ENCODE measurements at regions of chr4 and their contacts with region 1.

Region 1: GRCh38 chr4:168279556-168279955 is 39.0 kb downstream of the DDX60 start:
- DNase-seq: no peak
- ATAC-seq: no peak
- H3K4me3 ChIP-seq: no peak overlapping the region
- H3K27ac ChIP-seq: no peak overlapping the region
- H3K4me1 ChIP-seq: no peaks in the 10 kb centered on the region
- H3K27me3 ChIP-seq: no peaks in the 10 kb centered on the region
- CTCF ChIP-seq: no peak

Region 2: GRCh38 chr4:168318266-168318895 is 38.8 kb after region 1 on chr4 and contains the start of gene DDX60:
- intact Hi-C with region 1: loop called in 1 of 2 experiments (anchors 5 kb)
- DNase-seq: peak; percentile 68 to 76
- ATAC-seq: peak; percentile 82 to 95 (median 92)
- H3K4me3 ChIP-seq: peak within 1 kb of the TSS; percentile 98
- H3K27ac ChIP-seq: peak within 1 kb of the TSS; percentile 88
- H3K4me1 ChIP-seq: peaks cover 6% of the 10 kb centered on the region
- H3K27me3 ChIP-seq: no peaks in the 10 kb centered on the region
- CTCF ChIP-seq: peak; percentile 51
- total RNA-seq, gene DDX60: 1.4 to 3.6 (median 2.7) TPM

Region 3: DNA sequence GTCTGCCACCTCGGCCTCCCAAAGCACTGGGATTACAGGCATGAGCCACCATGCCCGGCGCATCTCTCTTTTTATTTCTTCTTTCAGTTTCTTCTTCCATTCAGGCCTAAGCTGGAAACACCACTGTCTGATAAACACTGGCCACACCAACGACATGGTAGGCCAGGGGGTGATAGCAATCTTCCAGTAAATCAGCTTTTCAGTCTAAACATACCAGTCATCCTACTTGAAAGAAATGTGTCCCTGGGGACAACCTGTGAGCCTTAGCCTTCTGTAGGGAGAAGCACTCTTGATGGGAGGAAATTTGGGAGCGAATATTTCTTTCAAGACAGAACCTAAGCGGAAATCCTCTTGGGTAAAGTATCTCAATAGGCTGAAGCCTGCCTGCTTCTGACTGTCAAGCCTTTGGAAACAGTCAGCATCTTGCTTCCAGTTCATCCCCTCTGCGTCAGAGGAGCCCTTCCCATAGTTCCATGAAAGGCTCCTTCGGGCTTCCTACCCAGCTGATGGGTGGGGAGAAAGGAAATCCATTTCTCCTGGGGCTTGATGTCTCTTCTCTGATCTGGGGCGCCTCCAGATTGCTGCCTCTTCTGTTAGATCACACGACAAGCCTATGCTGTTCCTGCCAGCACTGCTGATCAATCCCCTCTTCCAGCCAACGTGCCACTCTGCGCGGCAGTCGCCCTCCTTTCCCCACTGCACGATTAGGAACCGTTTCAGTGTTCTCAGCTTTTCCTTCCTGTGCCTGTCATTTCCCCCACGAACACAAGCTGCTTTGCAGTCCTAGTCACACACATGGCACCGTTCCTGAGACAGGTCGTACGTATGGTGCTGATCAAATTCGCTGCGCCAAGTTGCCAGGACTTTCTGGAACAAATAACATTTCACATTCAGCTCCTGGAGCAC is 780.0 kb after region 1 on chr4:
- intact Hi-C with region 1: no loop called
- DNase-seq: peak; percentile 37 to 74
- ATAC-seq: peak; percentile 57 to 82 (median 69)
- H3K4me3 ChIP-seq: peak overlapping the region; percentile 50
- H3K27ac ChIP-seq: peak overlapping the region; percentile 80
- H3K4me1 ChIP-seq: peaks cover 30% of the 10 kb centered on the region
- H3K27me3 ChIP-seq: no peaks in the 10 kb centered on the region
- CTCF ChIP-seq: no peak

Measured in psoas muscle (tissue), 8 donors.